ENCODE measurements at regions of chr6 and their contacts with region 1.

Region 1: GRCh38 chr6:36129941-36130666 is at the start of gene MAPK13:
- DNase-seq: peak; percentile 58 to 61
- H3K4me3 ChIP-seq: peak within 1 kb of the TSS; percentile 2 to 38 (median 18)
- H3K27ac ChIP-seq: peak within 1 kb of the TSS; percentile 69 to 76 (median 72)
- H3K4me1 ChIP-seq: peaks cover 15 to 23% of the 10 kb centered on the region in 2 donors
- H3K27me3 ChIP-seq: no peaks in the 10 kb centered on the region
- CTCF ChIP-seq: no peak
- POLR2A ChIP-seq: peak in 1 of 2 donors; percentile 36
- total RNA-seq, gene MAPK13: 33.2 to 50.9 (median 41.0) TPM

Region 2: GRCh38 chr6:35710241-35710847 is 419.8 kb before region 1 on chr6:
- intact Hi-C with region 1: no loop called
- DNase-seq: no peak
- H3K4me3 ChIP-seq: no peak overlapping the region
- H3K27ac ChIP-seq: no peak overlapping the region
- H3K4me1 ChIP-seq: no peaks in the 10 kb centered on the region
- H3K27me3 ChIP-seq: no peaks in the 10 kb centered on the region
- CTCF ChIP-seq: no peak
- POLR2A ChIP-seq: no peak

Region 3: GRCh38 chr6:36196880-36197548 is 66.9 kb after region 1 on chr6:
- intact Hi-C with region 1: loop called (anchors 5 kb)
- DNase-seq: peak; percentile 99
- H3K4me3 ChIP-seq: peak overlapping the region in 2 of 3 donors; percentile 66 to 69
- H3K27ac ChIP-seq: peak overlapping the region; percentile 93 to 98 (median 95)
- H3K4me1 ChIP-seq: peaks cover 10 to 14% of the 10 kb centered on the region in 2 donors
- H3K27me3 ChIP-seq: no peaks in the 10 kb centered on the region
- CTCF ChIP-seq: no peak
- POLR2A ChIP-seq: peak in 1 of 2 donors; percentile 77